ENCODE measurements at regions of chr2 and their contacts with region 1.

Region 1: GRCh38 chr2:12207491-12207890 is 461.1 kb downstream of the LPIN1 start:
- DNase-seq: no peak
- H3K4me3 ChIP-seq: no peak overlapping the region
- H3K27ac ChIP-seq: no peak overlapping the region
- H3K4me1 ChIP-seq: no peaks in the 10 kb centered on the region
- H3K27me3 ChIP-seq: peaks cover 3% of the 10 kb centered on the region
- CTCF ChIP-seq: no peak

Region 2: GRCh38 chr2:12131975-12132374 is 75.5 kb before region 1 on chr2:
- CTCF ChIA-PET with region 1: no interaction called
- dilution Hi-C with region 1: loop called (anchors 5 kb)
- in situ Hi-C with region 1: no loop called
- intact Hi-C with region 1: no loop called
- DNase-seq: no peak
- H3K4me3 ChIP-seq: no peak overlapping the region
- H3K27ac ChIP-seq: no peak overlapping the region
- H3K4me1 ChIP-seq: no peaks in the 10 kb centered on the region
- H3K27me3 ChIP-seq: peaks cover 2% of the 10 kb centered on the region
- CTCF ChIP-seq: no peak

Region 3: DNA sequence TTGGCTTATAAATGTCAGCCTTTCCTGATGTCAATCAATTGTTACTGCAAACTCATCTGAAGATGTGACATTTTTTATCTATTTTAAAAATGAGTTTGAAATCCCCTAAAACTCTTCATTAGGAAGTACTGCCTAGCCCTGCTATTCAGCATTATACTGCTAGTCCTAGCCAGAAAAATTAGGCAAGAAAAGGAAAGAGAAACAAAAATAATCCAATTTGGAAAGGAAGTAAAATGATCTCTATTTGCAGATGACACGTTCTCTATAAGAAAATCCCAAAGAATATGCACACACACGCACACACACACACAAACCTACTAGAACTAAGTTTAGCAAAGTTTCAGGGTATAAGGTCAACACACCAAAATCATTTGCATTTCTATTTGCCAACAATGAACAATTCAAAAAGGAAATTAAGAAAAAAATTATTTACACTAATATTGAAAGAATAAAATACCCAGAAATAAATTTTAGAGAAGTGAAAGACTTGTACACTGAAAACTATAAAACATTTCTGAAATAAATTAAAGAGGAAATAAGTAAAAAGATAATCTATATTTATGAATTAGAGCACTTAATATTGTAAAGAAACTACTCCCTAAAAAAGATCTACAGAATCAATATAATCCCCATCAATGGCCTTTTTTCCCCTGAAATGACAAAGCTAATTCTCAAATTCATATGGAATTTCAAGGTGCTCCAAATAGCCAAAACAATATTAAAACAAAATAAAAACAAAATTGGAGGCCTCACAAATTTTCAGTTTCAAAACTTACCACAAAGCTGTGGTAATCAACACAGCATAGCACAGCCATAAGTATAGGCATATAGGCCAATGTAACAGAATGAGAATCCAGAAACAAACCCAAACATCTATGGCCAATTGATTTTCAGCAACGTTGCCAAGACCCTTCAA is 75.5 kb after region 1 on chr2:
- CTCF ChIA-PET with region 1: no interaction called
- dilution Hi-C with region 1: no loop called
- in situ Hi-C with region 1: no loop called
- intact Hi-C with region 1: no loop called
- DNase-seq: no peak
- H3K4me3 ChIP-seq: no peak overlapping the region
- H3K27ac ChIP-seq: no peak overlapping the region
- H3K4me1 ChIP-seq: peaks cover 21% of the 10 kb centered on the region
- H3K27me3 ChIP-seq: peaks cover 2% of the 10 kb centered on the region
- CTCF ChIP-seq: no peak